ENCODE measurements at regions of chr10 and their contacts with region 1.

Region 1: GRCh38 chr10:102835007-102835482 is 2.2 kb downstream of the CYP17A1 start:
- DNase-seq: peak; percentile 63 to 70 (median 66)
- H3K4me3 ChIP-seq: no peak overlapping the region
- H3K4me3 Mint-ChIP-seq: no peak overlapping the region
- H3K27ac ChIP-seq: no peak overlapping the region
- H3K27ac Mint-ChIP-seq: no peak overlapping the region
- H3K4me1 ChIP-seq: no peaks in the 10 kb centered on the region
- H3K4me1 Mint-ChIP-seq: peaks cover 0 to 1% (median 0%) of the 10 kb centered on the region in 4 donors
- H3K27me3 ChIP-seq: no peaks in the 10 kb centered on the region
- H3K27me3 Mint-ChIP-seq: peaks cover 3 to 12% of the 10 kb centered on the region in 2 donors

Region 2: GRCh38 chr10:102904346-102904745 is 69.3 kb after region 1 on chr10:
- CTCF ChIA-PET with region 1: interaction called, 15 read pairs
- POLR2A ChIA-PET with region 1: no interaction called
- intact Hi-C with region 1: loop called (anchors 1 kb)
- DNase-seq: no peak
- H3K4me3 ChIP-seq: no peak overlapping the region
- H3K4me3 Mint-ChIP-seq: no peak overlapping the region
- H3K27ac ChIP-seq: no peak overlapping the region
- H3K27ac Mint-ChIP-seq: no peak overlapping the region
- H3K4me1 ChIP-seq: no peaks in the 10 kb centered on the region
- H3K4me1 Mint-ChIP-seq: no peaks in the 10 kb centered on the region
- H3K27me3 ChIP-seq: no peaks in the 10 kb centered on the region
- H3K27me3 Mint-ChIP-seq: no peaks in the 10 kb centered on the region

Region 3: DNA sequence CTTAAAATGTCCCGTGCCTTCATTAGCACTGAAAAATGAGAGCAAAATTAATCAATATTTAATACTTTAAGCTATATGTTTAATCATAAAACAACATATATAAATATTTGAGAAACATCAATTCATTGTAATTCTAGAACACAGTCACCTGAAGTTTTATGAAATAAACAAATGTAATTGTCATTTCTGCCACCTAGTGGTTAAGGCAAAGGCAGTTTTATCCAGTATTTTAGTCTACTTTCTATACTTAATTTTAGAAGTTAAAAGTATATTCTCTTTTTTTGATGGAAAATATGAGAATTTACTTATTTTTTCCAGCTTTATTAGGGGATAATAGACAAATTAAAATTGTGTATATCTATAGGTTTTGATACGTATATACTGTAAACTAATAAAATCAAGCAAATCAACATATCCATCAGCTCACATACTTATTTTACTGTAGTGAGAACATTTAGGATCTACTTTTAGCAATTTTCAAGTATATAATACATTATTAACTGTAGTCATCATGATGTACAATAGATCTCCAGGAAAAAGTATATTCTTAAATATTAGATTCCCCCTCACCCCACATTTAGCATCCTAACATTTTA is 499.0 kb after region 1 on chr10:
- CTCF ChIA-PET with region 1: interaction called, 18 read pairs
- POLR2A ChIA-PET with region 1: no interaction called
- intact Hi-C with region 1: no loop called
- DNase-seq: peak in 3 of 5 donors; percentile 7 to 22 (median 13)
- H3K4me3 ChIP-seq: no peak overlapping the region
- H3K4me3 Mint-ChIP-seq: no peak overlapping the region
- H3K27ac ChIP-seq: no peak overlapping the region
- H3K27ac Mint-ChIP-seq: no peak overlapping the region
- H3K4me1 ChIP-seq: no peaks in the 10 kb centered on the region
- H3K4me1 Mint-ChIP-seq: no peaks in the 10 kb centered on the region
- H3K27me3 ChIP-seq: no peaks in the 10 kb centered on the region
- H3K27me3 Mint-ChIP-seq: no peaks in the 10 kb centered on the region

Measured in CD4-positive, alpha-beta memory T cell (primary cell).